Right lobe of liver (tissue), 6 donors: ENCODE measurements at regions of chr1 and their contacts with region 1.

Region 1: GRCh38 chr1:154751690-154752089 is 118.4 kb downstream of the KCNN3 start:
- DNase-seq: peak in 1 of 3 donors; percentile 33
- ATAC-seq: peak in 2 of 4 donors; percentile 72 to 83
- H3K4me3 ChIP-seq: no peak overlapping the region
- H3K27ac ChIP-seq: no peak overlapping the region
- H3K4me1 ChIP-seq: no peaks in the 10 kb centered on the region
- H3K27me3 ChIP-seq: no peaks in the 10 kb centered on the region
- CTCF ChIP-seq: no peak
- POLR2A ChIP-seq: no peak

Region 2: GRCh38 chr1:154686507-154686906 is 65.2 kb before region 1 on chr1:
- intact Hi-C with region 1: no loop called
- DNase-seq: no peak
- ATAC-seq: peak in 1 of 4 donors; percentile 29
- H3K4me3 ChIP-seq: no peak overlapping the region
- H3K27ac ChIP-seq: no peak overlapping the region
- H3K4me1 ChIP-seq: no peaks in the 10 kb centered on the region
- H3K27me3 ChIP-seq: no peaks in the 10 kb centered on the region
- CTCF ChIP-seq: no peak
- POLR2A ChIP-seq: no peak

Region 3: GRCh38 chr1:154870115-154870571 is 118.5 kb after region 1 on chr1 and contains the start of gene KCNN3:
- intact Hi-C with region 1: loop called in 1 of 2 experiments (anchors 10 kb)
- DNase-seq: peak; percentile 86 to 92 (median 90)
- ATAC-seq: peak; percentile 98 to 99 (median 99)
- H3K4me3 ChIP-seq: peak within 1 kb of the TSS in 1 of 3 donors; percentile 16
- H3K27ac ChIP-seq: no peak within 1 kb of the TSS
- H3K4me1 ChIP-seq: peaks cover 0 to 4% (median 0%) of the 10 kb centered on the region in 4 donors
- H3K27me3 ChIP-seq: no peaks in the 10 kb centered on the region
- CTCF ChIP-seq: no peak
- POLR2A ChIP-seq: no peak
- total RNA-seq, gene KCNN3: 0.15 to 0.64 (median 0.32) TPM